ENCODE measurements at regions of chr9 and their contacts with region 1.

Region 1: DNA sequence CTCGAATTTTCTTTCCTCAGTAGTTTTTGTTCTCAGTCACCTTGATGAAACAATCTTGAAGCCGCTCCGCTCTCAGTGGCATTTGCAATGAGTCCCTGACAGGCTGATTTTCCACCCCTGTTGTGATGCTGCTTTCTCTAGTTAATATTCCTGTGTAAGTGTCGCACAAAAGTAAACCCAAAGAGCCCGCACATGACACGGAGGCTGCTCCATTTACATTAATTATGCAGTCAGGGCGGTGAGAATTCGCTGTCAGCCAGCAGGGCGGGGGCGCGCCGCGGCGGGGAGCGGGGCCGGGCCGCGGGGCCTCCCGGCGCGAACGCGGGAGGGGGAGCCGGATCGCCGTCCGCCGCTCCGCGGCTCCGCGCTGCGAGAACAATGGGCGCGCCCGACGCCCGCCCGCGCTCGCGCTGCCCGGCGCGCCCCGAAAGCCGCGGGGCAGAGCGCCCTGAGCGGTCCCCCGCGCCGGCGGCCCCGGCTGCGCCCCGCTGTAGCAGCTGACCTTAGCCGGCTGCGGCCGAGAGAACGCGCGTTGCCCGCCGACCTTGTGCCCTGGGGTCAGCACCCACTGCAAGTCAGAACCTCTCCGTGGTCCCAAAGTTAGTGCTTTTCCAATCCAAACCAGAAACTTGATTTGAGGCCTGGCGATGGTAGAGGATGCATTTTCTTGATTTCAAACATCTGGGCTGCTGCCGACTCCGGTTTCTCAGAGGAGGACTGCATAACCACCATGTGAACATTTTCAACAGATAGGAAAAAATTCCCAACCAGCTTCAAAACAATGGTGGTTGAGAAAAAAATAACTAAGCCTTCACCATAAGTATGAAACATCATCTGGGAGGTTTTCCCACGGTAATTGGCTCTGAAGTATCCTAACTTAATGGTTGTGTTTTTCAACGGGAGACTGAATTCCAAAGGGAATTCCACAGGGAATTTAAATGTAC is 142.6 kb downstream of the PBX3 start:
- DNase-seq: peak; percentile 52
- H3K4me3 ChIP-seq: peak overlapping the region; percentile 61 to 75 (median 61)
- H3K27ac ChIP-seq: peak overlapping the region; percentile 83
- H3K4me1 ChIP-seq: peaks cover 27% of the 10 kb centered on the region
- H3K27me3 ChIP-seq: no peaks in the 10 kb centered on the region
- CTCF ChIP-seq: no peak

Region 2: GRCh38 chr9:125568621-125569020 is 321.1 kb before region 1 on chr9:
- CTCF ChIA-PET with region 1: no interaction called
- dilution Hi-C with region 1: no loop called
- in situ Hi-C with region 1: no loop called
- intact Hi-C with region 1: no loop called
- DNase-seq: no peak
- H3K4me3 ChIP-seq: no peak overlapping the region
- H3K27ac ChIP-seq: no peak overlapping the region
- H3K4me1 ChIP-seq: peaks cover 23% of the 10 kb centered on the region
- H3K27me3 ChIP-seq: no peaks in the 10 kb centered on the region
- CTCF ChIP-seq: no peak

Region 3: DNA sequence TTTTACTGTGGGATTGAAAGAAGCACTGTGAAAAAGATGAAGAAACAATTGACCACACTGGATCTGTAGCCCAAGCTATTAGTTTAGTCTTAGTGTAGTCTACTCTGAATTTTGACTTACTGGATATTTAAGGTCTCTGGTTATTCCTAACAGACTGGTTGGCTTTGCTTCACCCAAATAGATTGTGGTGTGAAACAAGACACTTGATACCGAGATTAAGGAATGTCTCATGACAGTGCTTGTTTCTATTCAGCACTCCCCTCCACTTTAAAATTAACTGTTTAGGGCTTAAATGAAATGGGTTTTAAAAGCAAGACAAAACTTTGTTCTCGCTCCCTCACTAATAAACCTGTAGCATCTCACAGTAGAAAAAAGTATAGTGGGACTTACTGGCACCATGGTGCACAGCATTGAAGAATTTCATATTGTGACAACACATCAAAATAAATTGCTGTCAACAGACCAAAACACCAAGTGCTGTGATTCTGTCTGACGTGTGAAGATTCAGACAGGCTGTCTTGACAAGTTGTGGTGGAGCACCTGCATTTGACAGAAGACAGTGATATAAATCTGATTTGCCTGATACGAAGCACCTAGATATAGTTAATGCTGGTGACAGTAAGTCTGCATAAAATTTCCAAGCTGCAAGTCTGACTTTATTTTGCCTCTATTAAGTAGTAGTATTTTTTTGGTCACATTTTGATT is 69.5 kb before region 1 on chr9:
- CTCF ChIA-PET with region 1: no interaction called
- dilution Hi-C with region 1: no loop called
- in situ Hi-C with region 1: no loop called
- intact Hi-C with region 1: loop called (anchors 5 kb)
- DNase-seq: no peak
- H3K4me3 ChIP-seq: no peak overlapping the region
- H3K27ac ChIP-seq: no peak overlapping the region
- H3K4me1 ChIP-seq: peaks cover 9% of the 10 kb centered on the region
- H3K27me3 ChIP-seq: no peaks in the 10 kb centered on the region
- CTCF ChIP-seq: no peak

Region 4: DNA sequence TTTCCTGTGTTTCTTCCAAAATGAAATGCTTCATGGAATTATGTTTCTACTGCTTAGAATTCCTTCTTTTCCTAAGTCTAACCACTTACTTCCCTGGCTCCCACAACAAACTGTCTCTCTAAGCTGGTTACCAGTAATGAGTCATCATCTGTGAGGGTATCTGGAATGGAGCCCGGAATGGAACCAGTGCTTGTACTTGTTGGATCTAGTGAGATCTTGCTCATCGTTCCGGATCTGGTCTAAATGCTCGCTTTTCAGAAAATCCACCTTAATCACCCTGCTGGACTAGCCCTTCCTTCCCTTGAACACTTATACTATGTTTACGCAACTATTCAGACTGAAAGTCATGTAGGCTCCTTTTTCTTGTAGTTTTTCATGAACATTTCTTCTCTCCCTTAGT is 42.3 kb after region 1 on chr9:
- CTCF ChIA-PET with region 1: no interaction called
- dilution Hi-C with region 1: no loop called
- in situ Hi-C with region 1: no loop called
- intact Hi-C with region 1: loop called (anchors 5 kb)
- DNase-seq: peak; percentile 99
- H3K4me3 ChIP-seq: peak overlapping the region in 1 of 3 experiments; percentile 15
- H3K27ac ChIP-seq: peak overlapping the region; percentile 82
- H3K4me1 ChIP-seq: peaks cover 37% of the 10 kb centered on the region
- H3K27me3 ChIP-seq: no peaks in the 10 kb centered on the region
- CTCF ChIP-seq: no peak

Measured in mammary epithelial cell (primary cell).